CD4-positive, alpha-beta memory T cell (primary cell): ENCODE measurements at regions of chr11 and their contacts with region 1.

Region 1: GRCh38 chr11:18540207-18541009 is 13.7 kb upstream of the TSG101 start:
- DNase-seq: peak in 4 of 5 donors; percentile 46 to 58 (median 54)
- H3K4me3 ChIP-seq: no peak overlapping the region
- H3K4me3 Mint-ChIP-seq: no peak overlapping the region
- H3K27ac ChIP-seq: no peak overlapping the region
- H3K27ac Mint-ChIP-seq: peak overlapping the region in 5 of 7 donors; percentile 25 to 81 (median 33)
- H3K4me1 ChIP-seq: no peaks in the 10 kb centered on the region
- H3K4me1 Mint-ChIP-seq: peaks cover 0 to 7% (median 0%) of the 10 kb centered on the region in 4 donors
- H3K27me3 ChIP-seq: no peaks in the 10 kb centered on the region
- H3K27me3 Mint-ChIP-seq: no peaks in the 10 kb centered on the region

Region 2: GRCh38 chr11:18253231-18253630 is 287.2 kb before region 1 on chr11:
- CTCF ChIA-PET with region 1: no interaction called
- POLR2A ChIA-PET with region 1: no interaction called
- intact Hi-C with region 1: no loop called
- DNase-seq: no peak
- H3K4me3 ChIP-seq: no peak overlapping the region
- H3K4me3 Mint-ChIP-seq: no peak overlapping the region
- H3K27ac ChIP-seq: no peak overlapping the region
- H3K27ac Mint-ChIP-seq: no peak overlapping the region
- H3K4me1 ChIP-seq: no peaks in the 10 kb centered on the region
- H3K4me1 Mint-ChIP-seq: no peaks in the 10 kb centered on the region
- H3K27me3 ChIP-seq: no peaks in the 10 kb centered on the region
- H3K27me3 Mint-ChIP-seq: peaks cover 1 to 2% of the 10 kb centered on the region in 2 donors

Region 3: GRCh38 chr11:18588297-18589252 is 48.2 kb after region 1 on chr11 and contains the start of gene UEVLD:
- CTCF ChIA-PET with region 1: interaction called, 3 read pairs
- POLR2A ChIA-PET with region 1: no interaction called
- intact Hi-C with region 1: loop called (anchors 5 kb)
- DNase-seq: peak; percentile 45 to 72 (median 48)
- H3K4me3 ChIP-seq: peak within 1 kb of the TSS; percentile 8 to 56
- H3K4me3 Mint-ChIP-seq: no peak within 1 kb of the TSS
- H3K27ac ChIP-seq: peak within 1 kb of the TSS; percentile 91
- H3K27ac Mint-ChIP-seq: no peak within 1 kb of the TSS
- H3K4me1 ChIP-seq: peaks cover 48% of the 10 kb centered on the region
- H3K4me1 Mint-ChIP-seq: peaks cover 0 to 13% (median 11%) of the 10 kb centered on the region in 4 donors
- H3K27me3 ChIP-seq: no peaks in the 10 kb centered on the region
- H3K27me3 Mint-ChIP-seq: no peaks in the 10 kb centered on the region
- total RNA-seq, gene UEVLD: 10.6 to 10.7 TPM

Region 4: GRCh38 chr11:18650859-18651557 is 110.6 kb after region 1 on chr11:
- CTCF ChIA-PET with region 1: interaction called, 41 read pairs
- POLR2A ChIA-PET with region 1: interaction called, 3 read pairs
- intact Hi-C with region 1: loop called (anchors 1 kb)
- DNase-seq: peak; percentile 57 to 64 (median 62)
- H3K4me3 ChIP-seq: no peak overlapping the region
- H3K4me3 Mint-ChIP-seq: peak overlapping the region in 4 of 8 donors; percentile 17 to 76 (median 48)
- H3K27ac ChIP-seq: no peak overlapping the region
- H3K27ac Mint-ChIP-seq: peak overlapping the region in 5 of 7 donors; percentile 59 to 90 (median 75)
- H3K4me1 ChIP-seq: no peaks in the 10 kb centered on the region
- H3K4me1 Mint-ChIP-seq: peaks cover 5 to 10% (median 8%) of the 10 kb centered on the region in 4 donors
- H3K27me3 ChIP-seq: no peaks in the 10 kb centered on the region
- H3K27me3 Mint-ChIP-seq: no peaks in the 10 kb centered on the region

Region 5: GRCh38 chr11:18761741-18762140 is 221.3 kb after region 1 on chr11:
- CTCF ChIA-PET with region 1: interaction called, 26 read pairs
- POLR2A ChIA-PET with region 1: no interaction called
- intact Hi-C with region 1: loop called (anchors 1 kb)
- DNase-seq: no peak
- H3K4me3 ChIP-seq: no peak overlapping the region
- H3K4me3 Mint-ChIP-seq: no peak overlapping the region
- H3K27ac ChIP-seq: no peak overlapping the region
- H3K27ac Mint-ChIP-seq: peak overlapping the region in 1 of 7 donors; percentile 11
- H3K4me1 ChIP-seq: peaks cover 5% of the 10 kb centered on the region
- H3K4me1 Mint-ChIP-seq: peaks cover 4 to 5% (median 4%) of the 10 kb centered on the region in 4 donors
- H3K27me3 ChIP-seq: no peaks in the 10 kb centered on the region
- H3K27me3 Mint-ChIP-seq: peaks cover 0 to 3% of the 10 kb centered on the region in 2 donors

Region 6: GRCh38 chr11:18768472-18768901 is 228.1 kb after region 1 on chr11:
- CTCF ChIA-PET with region 1: interaction called, 26 read pairs
- POLR2A ChIA-PET with region 1: no interaction called
- intact Hi-C with region 1: loop called (anchors 1 kb)
- DNase-seq: no peak
- H3K4me3 ChIP-seq: no peak overlapping the region
- H3K4me3 Mint-ChIP-seq: no peak overlapping the region
- H3K27ac ChIP-seq: no peak overlapping the region
- H3K27ac Mint-ChIP-seq: no peak overlapping the region
- H3K4me1 ChIP-seq: peaks cover 5% of the 10 kb centered on the region
- H3K4me1 Mint-ChIP-seq: peaks cover 4 to 5% (median 4%) of the 10 kb centered on the region in 4 donors
- H3K27me3 ChIP-seq: no peaks in the 10 kb centered on the region
- H3K27me3 Mint-ChIP-seq: peaks cover 8% of the 10 kb centered on the region in 2 donors

Region 7: DNA sequence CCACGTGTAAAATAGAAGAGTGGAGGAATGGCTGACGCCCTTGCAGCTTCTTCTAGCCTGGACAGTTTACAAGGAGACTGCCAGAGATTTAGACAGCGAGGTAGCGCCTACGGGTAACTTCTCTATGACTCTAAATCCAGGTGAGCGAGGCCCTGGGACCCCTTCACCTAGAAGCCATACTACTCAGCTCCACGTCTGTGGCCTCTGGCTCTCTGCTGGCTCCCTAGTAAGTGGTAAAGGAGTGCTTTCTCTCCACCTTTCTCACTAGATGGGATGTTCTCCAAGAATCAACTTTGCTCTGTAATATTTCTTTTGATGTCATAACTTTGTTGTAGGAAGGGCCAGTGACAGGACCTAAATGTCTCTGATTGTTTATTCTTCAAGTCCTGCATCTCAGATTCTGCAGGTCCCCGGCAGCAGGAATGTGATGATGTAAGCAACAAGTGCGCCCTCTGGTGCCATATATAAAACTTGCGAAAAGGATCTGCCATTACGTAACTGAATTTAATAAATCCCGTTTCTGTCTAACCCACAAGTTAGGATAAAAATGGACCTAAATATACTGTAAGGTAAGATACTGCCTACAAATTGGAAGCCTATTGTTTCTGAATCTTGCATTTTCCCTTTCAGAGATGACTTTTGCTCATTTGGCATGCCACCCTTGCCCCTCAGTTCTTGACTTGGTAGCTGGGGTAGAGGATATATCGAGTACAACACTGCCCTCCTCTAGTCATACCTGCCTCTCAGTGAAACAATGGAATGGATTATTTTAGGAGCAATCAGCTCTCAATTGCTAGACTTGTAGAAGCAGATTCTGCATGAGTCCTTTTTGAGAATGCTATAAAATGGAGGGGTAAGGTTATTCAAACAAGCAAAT is 262.2 kb after region 1 on chr11:
- CTCF ChIA-PET with region 1: interaction called, 3 read pairs
- POLR2A ChIA-PET with region 1: no interaction called
- intact Hi-C with region 1: loop called (anchors 1 kb)
- DNase-seq: peak in 4 of 5 donors; percentile 20 to 43 (median 35)
- H3K4me3 ChIP-seq: no peak overlapping the region
- H3K4me3 Mint-ChIP-seq: peak overlapping the region in 1 of 8 donors; percentile 54
- H3K27ac ChIP-seq: no peak overlapping the region
- H3K27ac Mint-ChIP-seq: no peak overlapping the region
- H3K4me1 ChIP-seq: no peaks in the 10 kb centered on the region
- H3K4me1 Mint-ChIP-seq: peaks cover 0 to 6% (median 3%) of the 10 kb centered on the region in 4 donors
- H3K27me3 ChIP-seq: peaks cover 8% of the 10 kb centered on the region
- H3K27me3 Mint-ChIP-seq: peaks cover 6 to 10% of the 10 kb centered on the region in 2 donors